ENCODE measurements at regions of chr4 and their contacts with region 1.

Region 1: DNA sequence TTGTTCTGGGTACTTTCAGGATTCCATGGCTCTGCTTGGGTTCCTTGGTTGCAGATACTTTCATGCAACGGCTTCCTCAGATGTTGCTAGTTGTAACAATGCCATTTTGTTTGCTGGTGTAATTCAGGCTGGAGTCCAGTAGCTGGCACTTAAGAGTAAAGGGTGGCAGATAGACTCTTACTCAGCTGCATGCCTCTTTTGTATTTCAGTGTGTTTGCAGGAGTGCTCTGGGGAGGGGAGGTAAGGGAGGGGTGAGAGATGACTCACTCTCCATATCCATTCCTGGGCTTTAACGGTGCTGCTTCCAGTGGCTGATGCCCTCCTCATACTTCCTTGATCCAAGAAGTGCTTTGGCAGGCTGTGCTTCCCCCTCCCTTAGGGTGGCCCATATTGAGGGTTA is 155.2 kb downstream of the ZNF330 start:
- DNase-seq: peak; percentile 92
- H3K4me3 Mint-ChIP-seq: no peak overlapping the region
- H3K27ac Mint-ChIP-seq: peak overlapping the region; percentile 49
- H3K4me1 Mint-ChIP-seq: peaks cover 6% of the 10 kb centered on the region
- H3K27me3 Mint-ChIP-seq: no peaks in the 10 kb centered on the region
- CTCF ChIP-seq: peak; percentile 80

Region 2: GRCh38 chr4:141195095-141195707 is 180.7 kb before region 1 on chr4:
- CTCF ChIA-PET with region 1: no interaction called
- POLR2A ChIA-PET with region 1: no interaction called
- intact Hi-C with region 1: no loop called
- DNase-seq: no peak
- H3K4me3 Mint-ChIP-seq: no peak overlapping the region
- H3K27ac Mint-ChIP-seq: no peak overlapping the region
- H3K4me1 Mint-ChIP-seq: no peaks in the 10 kb centered on the region
- H3K27me3 Mint-ChIP-seq: no peaks in the 10 kb centered on the region
- CTCF ChIP-seq: no peak

Region 3: DNA sequence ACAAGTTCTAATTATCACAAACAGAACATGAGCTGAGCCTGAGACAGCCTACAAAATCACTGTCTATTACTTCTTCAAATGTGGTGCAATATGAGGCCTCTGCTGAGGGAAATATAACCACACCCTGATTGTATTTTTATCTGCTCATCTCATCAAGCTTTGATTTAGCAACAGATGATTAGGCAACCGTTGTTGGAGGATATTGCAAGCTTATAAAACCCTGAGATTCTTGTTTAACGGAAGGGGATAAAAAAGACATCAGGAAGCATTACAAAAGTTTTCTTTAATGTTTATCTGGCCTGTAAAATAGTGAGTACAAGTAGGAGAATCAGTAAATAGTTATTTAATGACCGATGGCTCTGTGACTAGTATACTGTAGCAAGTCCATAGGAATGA is 46.7 kb before region 1 on chr4:
- CTCF ChIA-PET with region 1: interaction called, 10 read pairs
- POLR2A ChIA-PET with region 1: no interaction called
- intact Hi-C with region 1: no loop called
- DNase-seq: peak; percentile 93
- H3K4me3 Mint-ChIP-seq: no peak overlapping the region
- H3K27ac Mint-ChIP-seq: peak overlapping the region; percentile 52
- H3K4me1 Mint-ChIP-seq: peaks cover 16% of the 10 kb centered on the region
- H3K27me3 Mint-ChIP-seq: no peaks in the 10 kb centered on the region
- CTCF ChIP-seq: no peak

Region 4: GRCh38 chr4:141657553-141658250 is 281.8 kb after region 1 on chr4:
- CTCF ChIA-PET with region 1: interaction called, 8 read pairs
- POLR2A ChIA-PET with region 1: no interaction called
- intact Hi-C with region 1: loop called (anchors 5 kb)
- DNase-seq: no peak
- H3K4me3 Mint-ChIP-seq: no peak overlapping the region
- H3K27ac Mint-ChIP-seq: no peak overlapping the region
- H3K4me1 Mint-ChIP-seq: no peaks in the 10 kb centered on the region
- H3K27me3 Mint-ChIP-seq: no peaks in the 10 kb centered on the region
- CTCF ChIP-seq: no peak

Region 5: GRCh38 chr4:141711014-141711610 is 335.3 kb after region 1 on chr4:
- CTCF ChIA-PET with region 1: interaction called, 6 read pairs
- POLR2A ChIA-PET with region 1: no interaction called
- intact Hi-C with region 1: loop called (anchors 1 kb)
- DNase-seq: peak; percentile 49
- H3K4me3 Mint-ChIP-seq: no peak overlapping the region
- H3K27ac Mint-ChIP-seq: no peak overlapping the region
- H3K4me1 Mint-ChIP-seq: peaks cover 20% of the 10 kb centered on the region
- H3K27me3 Mint-ChIP-seq: no peaks in the 10 kb centered on the region
- CTCF ChIP-seq: peak; percentile 42

Measured in MCF 10A (cell line).